GM18951 (cell line): ENCODE measurements at regions of chr6 and their contacts with region 1.

Region 1: DNA sequence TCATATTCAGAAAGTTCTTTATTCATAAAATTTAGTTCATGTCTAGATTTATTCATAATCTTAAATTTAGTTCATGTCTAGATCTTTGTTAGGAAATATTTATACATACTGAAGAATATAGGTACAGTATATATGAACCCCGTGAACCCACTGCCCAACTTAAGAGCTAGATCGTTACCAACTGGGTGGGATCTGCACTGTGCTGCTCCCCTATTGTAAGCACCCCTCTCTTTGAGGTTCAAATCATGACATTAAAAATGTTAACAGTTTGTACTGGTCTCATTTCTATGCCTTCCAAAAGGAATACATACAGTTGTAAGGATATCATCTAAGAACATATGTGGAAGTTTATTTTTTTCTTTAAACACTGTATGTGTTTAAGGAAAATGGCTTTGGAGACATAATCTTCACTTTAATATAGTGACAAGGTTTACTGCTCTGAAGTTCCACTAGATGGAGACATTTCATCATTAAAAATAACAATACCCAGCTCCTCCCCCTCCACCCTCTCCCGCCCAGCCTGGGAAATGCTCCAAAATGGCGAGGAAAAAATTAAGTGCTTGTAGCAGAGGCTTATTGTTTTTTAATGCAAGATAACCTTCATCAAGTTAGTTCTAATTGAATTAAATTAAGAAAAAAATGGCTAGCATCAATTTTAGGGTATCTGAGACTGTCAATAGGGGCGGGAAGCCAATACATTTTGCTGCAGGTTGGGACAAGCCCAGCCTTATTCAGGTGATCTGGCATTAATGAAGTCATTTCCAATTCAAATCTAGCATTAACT is 104.1 kb upstream of the TRAF3IP2 start:
- POLR2A ChIP-seq: no peak

Region 2: GRCh38 chr6:111663692-111664564 is 45.9 kb before region 1 on chr6:
- in situ Hi-C with region 1: no loop called
- POLR2A ChIP-seq: no peak

Region 3: DNA sequence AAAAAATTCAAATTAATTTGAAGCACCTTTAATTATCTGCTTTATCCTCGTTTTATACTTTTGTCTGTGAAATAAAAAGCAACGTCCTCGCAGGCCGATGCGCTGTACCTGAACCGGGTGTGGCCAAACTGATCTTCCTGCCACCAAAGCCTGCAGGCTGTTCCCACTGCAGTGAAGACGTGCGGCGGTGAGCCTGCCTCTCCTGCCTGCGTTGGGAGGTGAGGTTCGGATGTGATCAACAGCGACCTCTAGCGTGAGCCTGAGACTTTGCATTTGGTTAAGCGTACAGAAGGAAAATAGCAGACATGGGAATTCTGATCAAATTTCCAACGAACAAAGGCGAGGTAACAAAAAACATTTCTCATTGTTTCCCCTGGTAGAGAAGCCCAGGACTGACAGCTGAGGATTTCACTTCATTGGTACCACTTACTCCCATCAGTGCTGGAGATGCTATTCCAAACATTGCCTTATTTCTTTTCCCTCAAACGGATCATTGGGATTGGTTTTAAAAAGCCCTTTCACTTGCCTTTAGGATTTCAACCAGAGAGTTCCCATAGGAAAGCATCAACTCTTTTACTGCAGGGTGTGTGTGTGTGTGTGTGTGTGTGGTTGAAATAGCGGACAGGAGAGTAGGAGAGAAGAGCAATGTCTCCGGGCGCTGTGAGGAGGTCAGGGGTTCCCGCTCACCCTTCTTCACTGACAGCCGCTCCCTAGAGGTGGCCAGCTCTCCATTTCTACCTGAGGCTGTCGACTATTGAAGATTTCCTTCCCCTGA is 287.5 kb after region 1 on chr6:
- in situ Hi-C with region 1: loop called (anchors 5 kb)
- POLR2A ChIP-seq: no peak

Region 4: GRCh38 chr6:112037783-112038216 is 328.0 kb after region 1 on chr6:
- in situ Hi-C with region 1: loop called (anchors 10 kb)
- POLR2A ChIP-seq: no peak

Region 5: DNA sequence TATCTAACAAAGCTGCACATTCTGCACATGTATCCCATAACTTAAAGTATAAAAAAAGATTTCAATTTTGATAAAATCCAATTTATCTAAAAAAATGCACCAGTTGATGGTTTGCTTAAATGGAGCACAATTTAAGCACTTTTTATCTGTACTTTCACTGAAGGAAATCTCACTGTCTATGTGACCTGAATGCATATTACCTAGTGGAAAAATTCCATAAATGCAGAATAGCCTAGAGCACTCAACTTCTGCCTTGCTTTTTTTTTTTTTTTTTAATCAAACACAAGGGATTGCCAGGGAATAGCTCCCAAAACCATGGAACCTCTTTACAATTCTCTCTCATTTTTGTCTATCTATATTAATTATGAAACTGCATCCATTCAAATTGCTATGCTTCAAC is 717.7 kb after region 1 on chr6:
- in situ Hi-C with region 1: no loop called
- POLR2A ChIP-seq: no peak